A673 (cell line): ENCODE measurements at regions of chr20 and their contacts with region 1.

Region 1: DNA sequence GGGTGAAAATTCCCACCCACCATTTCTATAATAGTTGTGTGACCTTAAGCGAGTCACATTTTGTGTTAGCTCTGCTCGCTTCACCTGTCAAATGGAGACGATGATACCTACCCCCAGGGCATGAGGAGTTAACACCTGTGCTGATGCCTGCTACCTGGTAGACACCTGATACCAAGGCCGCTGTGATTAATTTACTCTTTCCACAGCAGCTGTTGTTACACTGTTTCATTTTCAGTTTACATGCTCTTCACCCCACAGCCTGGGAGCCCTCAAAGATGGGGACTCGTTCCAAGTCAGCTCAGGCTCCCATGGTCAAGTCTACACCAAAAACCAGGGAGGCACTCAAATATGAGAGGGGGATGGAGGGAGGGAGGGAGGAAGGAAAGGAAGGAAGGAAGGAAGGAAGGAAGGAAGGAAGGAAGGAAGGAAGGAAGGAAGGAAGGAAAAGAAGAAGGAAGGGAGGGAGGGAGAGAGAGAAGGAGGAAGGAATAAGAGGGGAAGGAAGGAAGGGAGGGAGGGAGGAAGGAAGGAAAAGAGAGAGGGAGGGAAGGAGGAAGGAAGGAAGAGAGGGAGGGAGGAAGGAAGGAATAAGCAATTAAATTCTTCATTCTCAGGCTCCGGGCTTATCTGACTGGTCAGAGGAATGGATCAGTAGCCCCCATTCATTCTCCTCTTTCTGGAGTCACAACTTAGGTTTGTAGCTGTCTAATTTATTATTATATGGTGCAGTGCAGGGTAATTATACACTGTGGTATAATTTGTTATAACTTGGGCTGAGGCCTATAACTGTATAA is 40.9 kb downstream of the PDYN start:
- DNase-seq: peak; percentile 90
- H3K4me3 ChIP-seq: no peak overlapping the region
- H3K27ac ChIP-seq: peak overlapping the region; percentile 94
- H3K4me1 ChIP-seq: peaks cover 73% of the 10 kb centered on the region
- H3K27me3 ChIP-seq: no peaks in the 10 kb centered on the region
- CTCF ChIP-seq: no peak

Region 2: DNA sequence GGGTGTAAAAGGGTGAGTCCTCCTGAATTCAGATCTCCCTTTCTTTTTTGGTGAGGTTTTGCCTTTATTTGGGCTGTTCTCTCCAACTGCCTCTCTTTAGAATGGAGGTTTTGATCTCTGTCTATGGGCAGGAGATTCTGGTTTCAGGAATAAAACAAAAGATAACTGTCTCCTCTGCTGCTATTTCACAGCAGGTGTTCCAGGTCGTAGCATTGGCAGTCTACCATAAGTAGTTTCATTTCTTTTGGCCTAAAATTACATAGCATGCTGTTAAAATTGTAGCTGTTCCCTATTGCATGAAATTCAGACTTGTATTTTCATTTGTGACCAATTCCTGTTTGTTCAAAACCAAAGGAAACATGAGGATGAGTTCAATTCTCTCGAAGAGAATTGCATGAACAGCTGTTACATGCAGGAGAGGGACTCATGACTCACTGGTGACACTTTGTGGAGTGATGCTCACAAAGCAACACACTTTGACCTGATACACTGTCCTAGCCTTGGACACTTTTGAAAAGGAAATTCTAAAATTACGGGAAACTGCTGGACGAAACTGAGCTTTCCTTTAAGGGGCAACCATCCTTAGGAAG is 218.6 kb before region 1 on chr20:
- CTCF ChIA-PET with region 1: interaction called, 10 read pairs
- POLR2A ChIA-PET with region 1: no interaction called
- intact Hi-C with region 1: no loop called
- DNase-seq: peak; percentile 32
- H3K4me3 ChIP-seq: no peak overlapping the region
- H3K27ac ChIP-seq: no peak overlapping the region
- H3K4me1 ChIP-seq: no peaks in the 10 kb centered on the region
- H3K27me3 ChIP-seq: peaks cover 3% of the 10 kb centered on the region
- CTCF ChIP-seq: peak; percentile 37; the same call in 1 of the 2 replicates

Region 3: DNA sequence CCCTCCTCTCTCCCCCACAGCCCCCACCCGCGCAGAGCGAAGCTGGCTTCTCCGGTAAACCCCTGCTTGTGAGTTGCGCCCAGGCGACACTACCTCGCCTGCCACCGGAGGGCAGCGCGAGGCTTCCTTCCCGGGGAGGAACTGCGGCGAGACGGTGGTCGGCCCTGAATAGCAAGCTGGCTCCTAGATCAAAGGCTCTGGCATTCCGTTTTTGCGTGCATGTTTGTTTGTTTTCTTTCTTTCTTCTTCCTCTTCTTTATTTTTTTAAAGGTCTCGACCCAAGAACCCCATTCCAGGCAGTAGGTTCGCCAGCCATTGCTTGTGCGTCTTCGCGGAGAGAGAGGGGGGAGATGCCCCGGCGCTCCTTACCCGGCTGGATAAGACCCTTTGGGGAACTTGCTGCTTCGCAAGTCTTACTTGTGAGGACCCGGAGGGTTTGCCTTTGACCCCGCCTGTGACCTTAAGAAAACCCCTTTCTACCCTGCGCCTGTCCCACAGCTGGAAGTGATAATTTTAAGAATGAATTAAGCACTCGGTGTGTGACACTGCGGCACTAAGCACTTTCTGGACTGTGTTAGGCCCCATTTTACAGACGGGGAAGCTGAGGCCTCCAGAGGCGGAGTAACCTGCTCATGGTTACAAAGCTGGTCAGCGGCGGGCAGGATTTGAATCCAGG is 150.4 kb before region 1 on chr20:
- CTCF ChIA-PET with region 1: interaction called, 5 read pairs
- POLR2A ChIA-PET with region 1: no interaction called
- intact Hi-C with region 1: loop called (anchors 5 kb)
- DNase-seq: peak; percentile 90
- H3K4me3 ChIP-seq: peak overlapping the region; percentile 62
- H3K27ac ChIP-seq: peak overlapping the region; percentile 85
- H3K4me1 ChIP-seq: peaks cover 45% of the 10 kb centered on the region
- H3K27me3 ChIP-seq: no peaks in the 10 kb centered on the region
- CTCF ChIP-seq: peak; percentile 87

Region 4: GRCh38 chr20:1857466-1857865 is 95.5 kb before region 1 on chr20:
- CTCF ChIA-PET with region 1: no interaction called
- POLR2A ChIA-PET with region 1: no interaction called
- intact Hi-C with region 1: loop called (anchors 10 kb)
- DNase-seq: no peak
- H3K4me3 ChIP-seq: no peak overlapping the region
- H3K27ac ChIP-seq: peak overlapping the region; percentile 69
- H3K4me1 ChIP-seq: peaks cover 78% of the 10 kb centered on the region
- H3K27me3 ChIP-seq: no peaks in the 10 kb centered on the region
- CTCF ChIP-seq: no peak

Region 5: GRCh38 chr20:1897965-1898464 is 54.9 kb before region 1 on chr20:
- CTCF ChIA-PET with region 1: no interaction called
- POLR2A ChIA-PET with region 1: no interaction called
- intact Hi-C with region 1: loop called (anchors 2 kb)
- DNase-seq: no peak
- H3K4me3 ChIP-seq: peak overlapping the region; percentile 88
- H3K27ac ChIP-seq: peak overlapping the region; percentile 60
- H3K4me1 ChIP-seq: peaks cover 47% of the 10 kb centered on the region
- H3K27me3 ChIP-seq: no peaks in the 10 kb centered on the region
- CTCF ChIP-seq: no peak

Region 6: DNA sequence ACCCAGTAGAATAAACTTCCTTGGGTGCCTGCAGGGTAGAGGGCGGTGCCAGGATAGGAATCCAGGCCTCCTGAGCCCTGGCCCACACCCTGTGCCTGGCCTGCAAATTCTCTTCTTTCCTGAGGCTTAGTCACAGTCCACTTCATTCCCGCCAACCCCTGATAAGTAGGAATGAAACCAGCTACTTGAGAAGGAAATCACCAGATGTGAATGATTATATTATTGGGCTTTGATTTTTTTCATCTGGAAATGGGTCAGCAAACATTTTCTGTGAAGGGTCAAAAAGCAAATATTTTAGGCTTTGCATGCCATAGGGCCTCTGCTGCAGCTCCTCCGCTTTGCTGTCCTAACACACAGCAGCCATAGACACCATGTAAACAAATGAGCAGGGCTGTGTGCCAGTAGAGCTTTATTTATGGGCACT is 198.9 kb after region 1 on chr20:
- CTCF ChIA-PET with region 1: no interaction called
- POLR2A ChIA-PET with region 1: no interaction called
- intact Hi-C with region 1: no loop called
- DNase-seq: no peak
- H3K4me3 ChIP-seq: no peak overlapping the region
- H3K27ac ChIP-seq: no peak overlapping the region
- H3K4me1 ChIP-seq: no peaks in the 10 kb centered on the region
- H3K27me3 ChIP-seq: no peaks in the 10 kb centered on the region
- CTCF ChIP-seq: no peak